Common myeloid progenitor, CD34-positive (primary cell): ENCODE measurements at regions of chr12 and their contacts with region 1.

Region 1: GRCh38 chr12:57476162-57476992 is 3.3 kb downstream of the ARHGAP9 start:
- DNase-seq: peak in 2 of 3 donors; percentile 80 to 83
- H3K4me3 ChIP-seq: peak overlapping the region; percentile 52 to 92 (median 76)
- H3K27ac ChIP-seq: peak overlapping the region; percentile 96
- H3K4me1 ChIP-seq: peaks cover 24 to 66% (median 61%) of the 10 kb centered on the region in 4 experiments
- H3K27me3 ChIP-seq: no peaks in the 10 kb centered on the region

Region 2: DNA sequence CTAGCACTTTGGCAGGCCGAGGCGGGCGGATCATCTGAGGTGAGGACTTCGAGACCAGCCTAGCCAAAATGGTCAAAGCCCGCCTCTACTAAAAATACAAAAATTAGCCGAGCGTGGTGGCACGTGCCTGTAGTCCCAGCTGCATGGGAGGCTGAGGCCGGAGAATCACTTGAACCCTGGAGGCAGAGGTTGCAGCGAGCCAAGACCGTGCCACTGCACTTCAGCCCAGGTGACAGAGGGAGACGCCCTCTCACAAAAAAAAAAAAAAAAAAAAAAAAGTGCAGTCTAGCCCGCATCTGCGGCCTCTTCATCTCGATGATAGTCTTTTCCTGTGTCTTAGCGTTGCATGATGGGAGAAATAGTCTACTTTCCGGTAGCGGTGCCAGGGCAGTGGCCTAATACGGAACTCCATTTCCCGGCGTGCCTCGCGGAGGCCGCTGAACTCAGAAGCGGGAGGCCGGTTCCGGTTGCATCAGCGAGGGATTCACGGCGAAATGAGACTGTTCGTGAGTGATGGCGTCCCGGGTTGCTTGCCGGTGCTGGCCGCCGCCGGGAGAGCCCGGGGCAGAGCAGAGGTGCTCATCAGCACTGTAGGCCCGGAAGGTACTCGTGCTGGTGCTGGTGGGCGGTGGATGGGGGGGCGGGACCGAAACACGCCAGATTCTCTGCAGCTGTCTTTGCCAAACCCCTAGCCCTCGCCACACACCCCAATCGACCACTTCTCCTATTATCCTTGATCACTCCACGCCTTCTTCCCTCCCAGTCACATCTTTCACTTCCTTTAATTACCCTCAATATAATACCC is 11.4 kb after region 1 on chr12 and contains the start of gene MARS1:
- CTCF ChIA-PET with region 1: interaction called, 14 read pairs
- POLR2A ChIA-PET with region 1: interaction called, 8 read pairs
- DNase-seq: peak; percentile 96 to 98 (median 98)
- H3K4me3 ChIP-seq: peak within 1 kb of the TSS; percentile 69 to 99 (median 93)
- H3K27ac ChIP-seq: peak within 1 kb of the TSS; percentile 92 to 97
- H3K4me1 ChIP-seq: peaks cover 0 to 17% (median 14%) of the 10 kb centered on the region in 4 experiments
- H3K27me3 ChIP-seq: no peaks in the 10 kb centered on the region